Activated CD4-positive, alpha-beta memory T cell treated with anti-CD3 and anti-CD28 coated beads for 36 hours (primary cell): ENCODE measurements at regions of chr5 and their contacts with region 1.

Region 1: DNA sequence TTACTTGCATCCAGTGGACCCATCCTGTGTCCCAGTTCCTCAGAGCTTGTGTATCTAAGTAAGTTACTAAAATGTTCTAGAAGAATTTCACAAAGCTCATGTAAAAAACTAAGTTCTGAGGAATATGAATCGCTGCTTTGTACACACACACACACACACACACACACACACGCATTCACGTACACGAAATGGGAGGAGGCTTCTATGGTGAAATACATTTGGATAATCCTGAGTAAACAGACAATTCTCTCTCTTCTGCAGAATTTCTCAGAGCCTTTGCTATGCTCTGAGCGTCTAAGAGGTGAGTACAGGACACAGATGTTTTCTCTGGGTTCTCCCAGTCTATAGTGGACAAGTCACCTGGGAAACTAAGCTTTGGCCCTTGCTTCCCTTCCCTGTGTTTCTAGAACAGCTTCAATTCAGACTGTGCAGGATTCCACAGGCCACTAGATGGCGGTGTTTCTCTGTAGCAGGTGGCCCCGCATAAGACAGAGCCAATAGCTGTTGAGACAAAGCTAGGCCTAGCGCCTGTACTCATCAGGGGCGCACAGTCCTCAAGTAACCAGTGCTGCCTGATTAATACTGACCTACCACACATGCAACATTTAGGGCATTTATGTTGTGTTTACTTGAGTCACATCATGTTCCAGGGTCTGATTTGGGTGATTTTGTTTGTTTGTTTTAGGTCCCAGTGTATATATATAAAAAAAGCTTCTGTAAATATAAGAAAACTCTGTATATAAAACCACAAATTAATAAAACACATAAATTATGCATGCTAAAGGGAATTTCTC is 114.8 kb downstream of the LIFR start:
- DNase-seq: peak; percentile 87
- H3K4me3 Mint-ChIP-seq: no peak overlapping the region
- H3K27ac Mint-ChIP-seq: no peak overlapping the region
- H3K4me1 Mint-ChIP-seq: no peaks in the 10 kb centered on the region
- H3K27me3 Mint-ChIP-seq: peaks cover 15% of the 10 kb centered on the region

Region 2: DNA sequence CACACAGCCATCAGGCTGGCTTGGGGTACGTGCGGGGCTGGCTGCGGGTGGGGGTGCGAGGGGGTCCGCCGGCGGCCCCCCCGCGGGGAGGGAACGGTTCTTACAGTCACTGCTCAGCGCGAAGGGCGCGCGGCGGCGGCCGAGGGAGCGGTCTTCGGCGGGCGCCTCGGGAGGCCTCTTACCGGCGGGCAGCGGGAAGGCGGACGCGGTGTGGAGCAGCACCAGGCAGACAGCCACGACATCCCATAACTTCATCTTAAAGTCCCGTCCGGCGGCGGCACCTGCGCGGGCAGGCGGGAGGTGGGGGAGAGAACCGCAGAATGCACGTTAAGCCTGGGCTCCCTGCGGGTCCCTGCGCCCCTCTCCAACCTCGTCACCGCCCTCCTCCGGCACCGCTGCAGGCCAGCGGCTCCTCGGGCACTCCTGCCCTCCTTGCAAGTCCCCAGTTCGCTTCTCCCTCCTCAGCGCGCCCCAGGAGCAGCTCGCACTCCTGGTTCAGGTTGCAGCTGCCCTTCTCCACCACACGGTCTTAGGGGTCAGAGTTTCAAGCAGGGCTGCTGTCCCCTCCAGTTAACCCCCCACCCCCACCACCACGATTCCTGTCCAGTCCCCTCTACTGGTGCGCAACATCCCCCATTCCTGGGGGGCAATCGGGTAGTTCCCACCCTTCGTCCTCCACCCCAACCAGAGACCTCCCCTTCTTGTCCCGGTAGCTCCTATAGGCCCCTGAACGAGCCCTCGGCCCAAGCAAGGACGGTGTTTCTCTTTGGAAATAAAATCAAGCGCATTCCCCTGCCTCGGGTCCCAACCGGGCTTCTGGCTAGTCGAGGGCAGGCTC is 606.9 kb before region 1 on chr5:
- CTCF ChIA-PET with region 1: no interaction called
- POLR2A ChIA-PET with region 1: no interaction called
- intact Hi-C with region 1: no loop called
- DNase-seq: no peak
- H3K4me3 Mint-ChIP-seq: no peak overlapping the region
- H3K27ac Mint-ChIP-seq: no peak overlapping the region
- H3K4me1 Mint-ChIP-seq: peaks cover 27% of the 10 kb centered on the region
- H3K27me3 Mint-ChIP-seq: peaks cover 79% of the 10 kb centered on the region

Region 3: GRCh38 chr5:38420691-38421390 is 20.8 kb before region 1 on chr5:
- CTCF ChIA-PET with region 1: interaction called, 39 read pairs
- POLR2A ChIA-PET with region 1: no interaction called
- intact Hi-C with region 1: no loop called
- DNase-seq: peak; percentile 42
- H3K4me3 Mint-ChIP-seq: no peak overlapping the region
- H3K27ac Mint-ChIP-seq: no peak overlapping the region
- H3K4me1 Mint-ChIP-seq: no peaks in the 10 kb centered on the region
- H3K27me3 Mint-ChIP-seq: peaks cover 5% of the 10 kb centered on the region

Region 4: DNA sequence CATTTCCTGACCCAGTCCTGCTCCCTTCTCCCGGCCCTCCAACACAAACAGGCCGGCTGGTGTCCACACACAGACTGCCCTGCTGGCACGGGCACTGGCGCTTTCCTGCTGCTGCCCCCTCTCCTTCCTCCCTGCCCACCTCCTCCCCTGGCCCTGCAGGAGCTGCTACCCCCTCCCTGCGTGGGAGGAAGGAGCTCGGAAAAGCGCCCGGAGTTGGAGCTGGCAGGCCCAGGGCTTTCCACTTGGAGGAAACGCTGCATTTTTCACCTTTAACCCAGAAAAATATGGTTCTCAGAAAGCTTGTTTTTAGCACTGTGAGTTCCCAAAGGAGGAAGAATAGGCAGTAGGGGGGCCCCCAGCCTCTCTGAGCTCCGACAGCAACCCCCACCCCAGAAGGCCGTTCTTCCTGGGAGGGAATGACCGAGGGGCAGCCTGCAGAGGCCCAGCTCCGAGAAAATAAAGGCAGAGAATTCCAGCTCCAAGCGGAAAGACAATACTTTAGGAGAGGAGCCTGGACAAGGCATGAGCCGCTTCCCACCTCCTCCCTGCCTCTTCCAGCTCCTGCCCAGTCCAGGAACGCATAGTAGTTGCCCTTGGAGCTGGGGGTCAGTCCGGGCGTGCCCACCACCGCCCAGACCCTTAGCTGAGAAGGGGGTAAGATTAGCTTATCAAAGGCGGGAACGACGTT is 25.8 kb after region 1 on chr5:
- CTCF ChIA-PET with region 1: interaction called, 14 read pairs
- POLR2A ChIA-PET with region 1: no interaction called
- intact Hi-C with region 1: no loop called
- DNase-seq: no peak
- H3K4me3 Mint-ChIP-seq: no peak overlapping the region
- H3K27ac Mint-ChIP-seq: no peak overlapping the region
- H3K4me1 Mint-ChIP-seq: no peaks in the 10 kb centered on the region
- H3K27me3 Mint-ChIP-seq: peaks cover 23% of the 10 kb centered on the region

Region 5: DNA sequence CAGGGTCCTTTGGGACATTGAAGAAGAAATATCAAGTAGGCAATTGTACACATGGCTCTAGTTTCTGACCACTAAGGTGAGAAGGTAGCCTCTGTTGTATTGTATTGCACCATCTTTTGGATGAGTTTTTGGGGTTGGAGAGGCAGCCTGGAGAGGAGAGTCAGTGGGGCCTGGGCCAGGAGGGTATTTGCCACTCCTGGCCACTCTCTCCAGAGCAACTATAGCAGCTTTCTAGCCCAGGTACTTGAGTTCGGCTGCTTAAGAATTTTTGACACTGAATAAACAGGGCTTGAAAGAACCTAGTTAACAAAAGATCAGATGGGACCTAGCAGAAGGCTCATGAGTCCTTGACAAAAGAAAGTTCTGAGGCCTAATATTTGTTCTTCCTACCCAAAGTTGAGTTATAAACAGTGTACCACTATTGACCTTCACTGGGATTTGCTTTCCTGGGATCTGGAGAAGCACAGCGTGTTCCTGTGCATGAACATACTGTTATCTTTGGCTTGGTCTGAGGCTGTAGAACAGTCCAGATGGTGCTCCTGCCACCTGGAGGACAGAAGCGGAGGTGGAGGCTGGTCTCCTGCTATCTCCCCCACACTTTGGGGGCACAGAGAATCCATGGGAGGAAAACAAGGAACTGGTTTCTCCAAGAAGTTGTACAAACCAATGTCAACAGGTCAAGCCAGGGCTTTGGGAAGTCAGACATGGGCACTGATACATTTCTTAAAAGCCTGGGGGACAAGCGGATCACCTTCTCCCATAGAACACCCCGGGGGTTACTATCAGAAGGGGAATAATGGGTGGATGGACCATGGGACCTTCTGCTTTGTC is 225.2 kb after region 1 on chr5:
- CTCF ChIA-PET with region 1: interaction called, 16 read pairs
- POLR2A ChIA-PET with region 1: no interaction called
- intact Hi-C with region 1: loop called (anchors 1 kb)
- DNase-seq: no peak
- H3K4me3 Mint-ChIP-seq: no peak overlapping the region
- H3K27ac Mint-ChIP-seq: no peak overlapping the region
- H3K4me1 Mint-ChIP-seq: no peaks in the 10 kb centered on the region
- H3K27me3 Mint-ChIP-seq: peaks cover 17% of the 10 kb centered on the region

Region 6: DNA sequence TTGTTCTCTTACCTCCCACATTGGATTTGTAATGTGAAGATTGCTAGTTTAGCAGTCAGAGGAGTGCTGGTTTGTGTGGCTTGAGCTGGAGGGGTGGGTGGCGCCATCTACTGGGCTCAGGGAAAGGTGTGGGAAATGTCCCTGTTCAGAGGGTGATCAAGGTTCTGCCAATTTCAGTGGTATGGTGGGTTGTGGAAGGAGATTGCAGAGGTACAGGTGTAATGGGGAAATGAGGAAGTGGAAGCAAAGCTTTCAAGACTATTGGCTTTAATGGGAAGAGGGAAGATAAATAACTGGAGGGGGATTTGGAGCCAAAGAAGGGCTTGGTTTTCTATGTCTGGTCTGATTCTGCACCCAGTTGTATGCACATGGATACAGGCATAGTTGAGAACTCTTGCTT is 480.5 kb after region 1 on chr5:
- CTCF ChIA-PET with region 1: interaction called, 74 read pairs
- POLR2A ChIA-PET with region 1: no interaction called
- intact Hi-C with region 1: loop called (anchors 2 kb)
- DNase-seq: peak; percentile 72
- H3K4me3 Mint-ChIP-seq: no peak overlapping the region
- H3K27ac Mint-ChIP-seq: no peak overlapping the region
- H3K4me1 Mint-ChIP-seq: no peaks in the 10 kb centered on the region
- H3K27me3 Mint-ChIP-seq: peaks cover 17% of the 10 kb centered on the region

Region 7: DNA sequence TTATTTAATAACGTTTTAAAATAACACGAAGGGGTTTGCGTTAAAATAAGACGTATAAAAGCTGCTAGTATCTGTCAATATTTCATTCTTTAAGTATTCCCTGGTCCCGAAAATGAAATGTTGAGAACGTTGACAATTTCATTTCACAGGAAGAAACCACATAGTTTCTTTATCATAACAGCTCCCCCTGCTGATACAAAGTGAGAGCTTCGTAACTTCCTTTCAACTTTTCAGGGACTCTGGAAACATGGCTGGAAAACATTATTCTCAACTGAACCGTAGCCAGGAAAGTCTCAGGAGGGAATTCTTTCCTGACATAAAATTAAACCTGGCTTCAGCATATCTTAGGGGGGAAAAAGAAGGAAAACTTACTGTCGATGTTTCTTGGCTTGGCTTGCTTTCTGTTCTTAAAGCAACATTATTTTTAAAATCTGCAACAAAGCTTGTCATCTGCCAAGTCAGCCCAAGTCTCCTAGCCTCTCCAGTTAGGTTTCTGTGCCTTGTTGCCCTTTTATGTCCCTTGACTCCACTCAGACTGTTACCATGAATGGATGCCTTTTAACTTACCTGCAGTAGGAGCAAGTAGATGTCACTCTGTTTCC is 1106.0 kb after region 1 on chr5:
- CTCF ChIA-PET with region 1: interaction called, 4 read pairs
- POLR2A ChIA-PET with region 1: no interaction called
- intact Hi-C with region 1: loop called (anchors 10 kb)
- DNase-seq: no peak
- H3K4me3 Mint-ChIP-seq: no peak overlapping the region
- H3K27ac Mint-ChIP-seq: no peak overlapping the region
- H3K4me1 Mint-ChIP-seq: peaks cover 7% of the 10 kb centered on the region
- H3K27me3 Mint-ChIP-seq: peaks cover 4% of the 10 kb centered on the region